ENCODE measurements at regions of chr1 and their contacts with region 1.

Region 1: GRCh38 chr1:68232354-68233148 is at the start of gene WLS:
- DNase-seq: peak; percentile 93
- H3K4me3 ChIP-seq: peak within 1 kb of the TSS; percentile 80 to 94 (median 80)
- H3K27ac ChIP-seq: peak within 1 kb of the TSS; percentile 94 to 97 (median 96)
- H3K4me1 ChIP-seq: peaks cover 5 to 42% (median 37%) of the 10 kb centered on the region in 4 donors
- H3K27me3 ChIP-seq: no peaks in the 10 kb centered on the region
- CTCF ChIP-seq: peak in 1 of 3 experiments; percentile 18
- EP300 ChIP-seq: no peak
- POLR2A ChIP-seq: peak; percentile 65
- total RNA-seq, gene WLS: 94.8 to 228 (median 163) TPM

Region 2: GRCh38 chr1:68120136-68120791 is 112.3 kb before region 1 on chr1:
- intact Hi-C with region 1: loop called (anchors 2 kb)
- DNase-seq: peak; percentile 93
- H3K4me3 ChIP-seq: no peak overlapping the region
- H3K27ac ChIP-seq: peak overlapping the region; percentile 70 to 73 (median 72)
- H3K4me1 ChIP-seq: peaks cover 4 to 42% (median 31%) of the 10 kb centered on the region in 4 donors
- H3K27me3 ChIP-seq: no peaks in the 10 kb centered on the region
- CTCF ChIP-seq: peak; percentile 82 to 84 (median 83)
- EP300 ChIP-seq: no peak
- POLR2A ChIP-seq: no peak

Region 3: DNA sequence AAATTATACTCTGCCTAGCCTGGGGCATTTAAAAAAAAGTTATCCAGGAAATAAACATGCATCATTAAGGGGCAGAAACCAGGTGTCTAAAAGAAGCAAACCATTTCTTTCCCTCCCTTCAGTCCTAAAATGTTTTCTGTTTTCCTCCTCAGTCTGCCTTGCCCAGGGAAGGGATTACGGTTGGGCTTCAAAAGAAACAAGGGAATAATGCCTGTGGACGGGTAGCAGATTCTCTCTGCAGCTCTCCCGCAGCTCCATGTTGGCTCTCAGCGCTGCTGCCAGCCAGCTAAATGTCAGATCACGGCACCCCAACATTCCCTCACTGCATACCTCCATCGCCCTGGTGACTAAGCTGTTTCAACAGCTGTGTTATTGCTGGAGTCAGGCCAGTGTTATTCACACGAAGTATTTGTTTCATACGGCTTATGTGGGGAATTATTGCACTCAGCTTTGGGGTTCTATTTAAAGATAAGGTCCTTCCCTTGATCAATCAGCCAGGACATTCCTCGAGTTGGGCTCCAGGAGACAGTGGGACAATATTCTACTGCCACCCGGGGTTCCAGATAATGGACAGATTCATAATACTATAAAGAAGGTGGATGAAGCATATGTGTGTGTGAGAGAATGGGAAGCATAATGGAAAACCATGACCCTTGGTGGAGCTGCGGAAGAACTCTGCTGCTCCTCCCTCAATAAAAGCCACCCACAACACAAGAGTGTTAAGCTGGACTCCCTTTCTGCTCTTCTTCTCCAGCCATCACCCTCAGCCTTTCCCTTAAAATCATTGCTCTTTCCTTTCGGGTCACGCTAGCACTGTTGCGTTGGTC is 58.4 kb before region 1 on chr1:
- intact Hi-C with region 1: loop called (anchors 2 kb)
- DNase-seq: no peak
- H3K4me3 ChIP-seq: peak overlapping the region; percentile 21 to 39 (median 27)
- H3K27ac ChIP-seq: peak overlapping the region; percentile 75 to 82 (median 78)
- H3K4me1 ChIP-seq: peaks cover 57 to 85% (median 81%) of the 10 kb centered on the region in 4 donors
- H3K27me3 ChIP-seq: no peaks in the 10 kb centered on the region
- CTCF ChIP-seq: no peak
- EP300 ChIP-seq: no peak
- POLR2A ChIP-seq: no peak

Region 4: GRCh38 chr1:68321084-68321685 is 88.6 kb after region 1 on chr1:
- intact Hi-C with region 1: loop called (anchors 5 kb)
- DNase-seq: no peak
- H3K4me3 ChIP-seq: no peak overlapping the region
- H3K27ac ChIP-seq: peak overlapping the region; percentile 72 to 78 (median 76)
- H3K4me1 ChIP-seq: peaks cover 0 to 57% (median 40%) of the 10 kb centered on the region in 4 donors
- H3K27me3 ChIP-seq: no peaks in the 10 kb centered on the region
- CTCF ChIP-seq: peak; percentile 78 to 82 (median 79)
- EP300 ChIP-seq: no peak
- POLR2A ChIP-seq: no peak

Region 5: GRCh38 chr1:68868606-68869005 is 636.1 kb after region 1 on chr1:
- intact Hi-C with region 1: no loop called
- DNase-seq: no peak
- H3K4me3 ChIP-seq: no peak overlapping the region
- H3K27ac ChIP-seq: no peak overlapping the region
- H3K4me1 ChIP-seq: no peaks in the 10 kb centered on the region
- H3K27me3 ChIP-seq: no peaks in the 10 kb centered on the region
- CTCF ChIP-seq: no peak
- EP300 ChIP-seq: no peak
- POLR2A ChIP-seq: no peak